Caki2 (cell line): ENCODE measurements at regions of chr11 and their contacts with region 1.

Region 1: GRCh38 chr11:44936525-44936924 is 14.2 kb downstream of the TP53I11 start:
- DNase-seq: peak; percentile 56

Region 2: DNA sequence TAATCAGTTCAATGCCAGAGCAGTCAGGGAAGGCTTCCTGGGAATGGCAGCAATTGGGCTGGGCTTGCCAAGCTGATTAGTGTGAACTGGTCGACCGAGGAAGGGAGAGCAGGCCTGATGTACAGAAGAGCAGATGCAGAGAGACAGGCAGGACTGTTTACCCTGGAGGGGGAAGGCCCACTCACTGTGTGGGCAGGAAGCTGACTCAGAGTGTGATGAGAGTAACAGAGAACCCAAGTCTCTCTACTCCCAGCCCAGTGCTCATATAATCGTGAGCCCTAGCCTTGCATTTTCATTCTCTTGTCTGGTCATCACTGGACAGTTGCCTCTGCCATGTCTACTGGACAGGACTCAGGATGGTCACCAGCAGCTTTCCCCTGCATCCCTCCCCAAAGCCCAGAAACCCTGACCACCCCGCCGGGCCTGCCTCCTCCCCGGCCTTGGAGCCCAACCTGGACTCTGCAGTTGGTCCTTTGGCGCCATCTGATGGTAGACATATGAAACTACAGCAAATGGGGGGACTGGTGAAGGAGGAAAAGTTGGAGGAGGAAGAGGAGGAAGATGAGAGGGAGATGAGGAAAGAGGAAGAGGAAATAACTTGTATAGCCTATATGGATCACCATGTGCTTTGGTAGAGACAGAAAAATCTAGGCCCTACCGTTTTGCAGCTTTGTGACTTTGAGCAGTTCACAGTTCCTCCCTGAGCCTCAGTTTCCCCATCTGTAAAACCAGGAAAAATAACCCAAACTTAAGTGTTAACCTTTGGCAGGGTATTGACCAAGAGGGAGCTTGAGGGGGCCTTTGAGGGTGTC is 166.5 kb after region 1 on chr11:
- in situ Hi-C with region 1: loop called (anchors 25 kb)
- DNase-seq: peak; percentile 61

Region 3: DNA sequence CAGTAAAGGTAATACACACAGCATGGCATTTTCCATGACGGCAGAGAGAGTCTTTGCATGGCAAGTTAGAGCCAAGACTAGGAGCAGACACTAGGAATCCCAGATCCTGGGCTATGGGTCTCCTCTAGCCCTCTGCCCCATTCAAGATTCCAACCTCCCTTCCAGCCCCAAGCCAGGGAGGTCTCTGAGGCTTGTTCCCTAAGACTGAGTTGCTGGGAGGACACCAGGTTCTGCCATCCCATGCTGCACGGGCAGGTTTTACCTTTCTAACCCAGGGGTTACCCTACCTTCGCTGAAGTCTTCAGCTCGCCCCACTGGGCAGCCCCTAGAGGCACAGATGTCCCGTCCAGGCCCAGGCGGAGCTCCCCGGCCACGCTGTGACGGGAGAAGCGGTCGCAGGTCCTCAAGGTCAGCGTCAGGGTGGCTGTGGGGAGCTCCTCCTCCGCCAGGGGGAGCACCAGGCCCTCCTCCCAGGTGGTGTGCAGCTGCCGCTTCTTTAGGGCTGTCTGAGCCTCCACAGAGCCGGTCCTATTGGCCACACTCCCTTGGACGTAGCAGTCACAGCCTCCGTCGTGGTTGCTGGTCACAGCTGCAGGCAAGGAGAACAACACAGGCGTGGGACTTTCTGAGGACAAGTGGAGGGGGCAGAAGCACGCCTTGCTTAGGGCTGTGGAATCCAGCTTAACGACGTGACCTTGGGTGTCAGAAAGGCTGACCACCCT is 315.8 kb after region 1 on chr11:
- in situ Hi-C with region 1: no loop called
- DNase-seq: no peak